K562 (cell line): ENCODE measurements at regions of chr22 and their contacts with region 1.

Region 1: GRCh38 chr22:17830043-17830961 is 56.0 kb upstream of the BID start:
- DNase-seq: peak; percentile 89 to 91 (median 90)
- ATAC-seq: peak; percentile 97
- H3K4me3 ChIP-seq: no peak overlapping the region
- H3K27ac ChIP-seq: no peak overlapping the region
- H3K4me1 ChIP-seq: peaks cover 0 to 8% of the 10 kb centered on the region in 2 experiments; a peak in 1 of 5 replicates
- H3K27me3 ChIP-seq: no peaks in the 10 kb centered on the region
- CTCF ChIP-seq: peak; percentile 97 to 99 (median 98)
- EP300 ChIP-seq: no peak
- POLR2A ChIP-seq: no peak
- RAD21 ChIP-seq: peak; percentile 95 to 99

Region 2: DNA sequence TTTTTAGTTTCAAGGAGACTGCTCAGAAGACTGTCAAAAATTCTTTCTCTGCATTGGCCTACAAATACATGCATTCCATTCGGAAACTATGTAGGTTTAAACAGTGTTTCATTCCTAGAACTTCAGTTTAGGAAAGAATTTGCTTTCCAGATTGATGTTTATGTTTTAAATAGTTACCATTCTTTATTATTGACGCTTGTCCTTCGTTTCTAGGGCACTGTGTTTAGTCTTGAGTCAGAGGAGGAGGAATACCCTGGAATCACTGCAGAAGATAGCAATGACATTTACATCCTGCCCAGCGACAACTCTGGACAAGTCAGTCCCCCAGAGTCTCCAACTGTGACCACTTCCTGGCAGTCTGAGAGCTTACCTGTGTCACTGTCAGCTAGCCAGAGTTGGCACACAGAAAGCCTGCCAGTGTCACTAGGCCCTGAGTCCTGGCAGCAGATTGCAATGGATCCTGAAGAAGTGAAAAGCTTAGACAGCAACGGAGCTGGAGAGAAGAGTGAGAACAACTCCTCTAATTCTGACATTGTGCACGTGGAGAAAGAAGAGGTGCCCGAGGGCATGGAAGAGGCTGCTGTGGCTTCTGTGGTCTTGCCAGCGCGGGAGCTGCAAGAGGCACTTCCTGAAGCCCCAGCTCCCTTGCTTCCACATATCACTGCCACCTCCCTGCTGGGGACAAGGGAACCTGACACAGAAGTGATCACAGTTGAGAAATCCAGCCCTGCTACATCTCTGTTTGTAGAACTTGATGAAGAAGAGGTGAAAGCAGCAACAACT is 103.6 kb before region 1 on chr22:
- CTCF ChIA-PET with region 1: no interaction called
- POLR2A ChIA-PET with region 1: no interaction called
- in situ Hi-C with region 1: no loop called
- intact Hi-C with region 1: no loop called
- DNase-seq: no peak
- ATAC-seq: no peak
- H3K4me3 ChIP-seq: no peak overlapping the region
- H3K27ac ChIP-seq: no peak overlapping the region
- H3K4me1 ChIP-seq: peaks cover 0 to 8% of the 10 kb centered on the region in 2 experiments; a peak in 2 of 5 replicates
- H3K27me3 ChIP-seq: no peaks in the 10 kb centered on the region
- CTCF ChIP-seq: no peak
- EP300 ChIP-seq: no peak
- POLR2A ChIP-seq: no peak
- RAD21 ChIP-seq: no peak

Region 3: DNA sequence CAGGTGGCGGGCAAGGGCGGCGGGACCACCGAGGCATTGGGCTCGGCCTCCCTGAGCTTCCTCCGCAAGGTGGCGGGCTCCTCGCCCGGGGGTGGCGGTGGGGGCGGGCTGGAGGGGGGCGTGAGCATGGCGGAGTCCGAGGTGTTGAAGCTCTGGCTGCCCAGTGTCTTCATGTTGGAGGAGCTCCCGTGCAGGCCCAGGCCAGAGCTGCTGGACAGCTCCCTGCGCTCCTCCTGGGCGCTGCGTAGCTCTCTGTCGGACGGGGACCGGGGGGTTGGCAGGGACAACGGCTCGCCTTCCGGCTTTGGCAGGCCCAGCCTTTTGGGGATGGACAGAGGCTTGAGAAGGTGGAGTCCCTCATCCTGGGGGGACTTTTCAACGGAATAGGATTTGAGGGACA is 12.1 kb before region 1 on chr22:
- CTCF ChIA-PET with region 1: no interaction called
- POLR2A ChIA-PET with region 1: interaction called, 10 read pairs
- in situ Hi-C with region 1: no loop called
- intact Hi-C with region 1: no loop called
- DNase-seq: no peak
- ATAC-seq: no peak
- H3K4me3 ChIP-seq: no peak overlapping the region
- H3K27ac ChIP-seq: no peak overlapping the region
- H3K4me1 ChIP-seq: peaks cover 0 to 8% of the 10 kb centered on the region in 2 experiments; a peak in 1 of 5 replicates
- H3K27me3 ChIP-seq: no peaks in the 10 kb centered on the region
- CTCF ChIP-seq: no peak
- EP300 ChIP-seq: no peak
- POLR2A ChIP-seq: no peak
- RAD21 ChIP-seq: no peak

Region 4: DNA sequence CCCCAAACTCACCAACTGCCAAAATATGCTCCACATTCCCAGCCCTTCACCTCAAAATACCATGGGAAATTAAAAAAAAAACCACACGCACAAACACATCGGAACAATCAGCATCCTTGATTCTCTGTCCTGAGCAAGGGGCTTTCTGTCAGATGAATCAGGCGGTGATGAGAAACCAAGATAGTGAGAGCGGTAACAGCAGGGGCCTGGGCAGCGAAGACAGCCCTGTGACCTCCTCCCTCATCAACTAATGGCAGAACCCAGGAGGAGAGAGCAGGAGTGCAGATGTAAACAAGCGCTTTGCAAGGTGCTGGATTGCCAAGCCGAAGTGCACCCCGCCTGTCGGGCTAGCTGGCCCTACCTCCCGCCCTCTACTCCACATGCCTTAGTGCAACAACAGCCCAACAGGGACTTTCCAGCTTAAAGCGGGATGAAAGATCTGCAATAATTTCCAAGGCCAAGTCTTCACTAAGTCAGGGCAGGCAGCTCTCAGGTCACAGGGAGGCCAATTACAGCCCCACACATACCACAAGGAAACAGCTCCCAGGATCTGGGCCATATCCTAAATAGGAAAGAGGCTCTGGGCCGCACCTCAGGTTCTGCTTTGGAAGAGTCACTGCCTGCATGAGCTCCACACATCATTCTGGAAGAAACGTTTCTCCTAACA is 16.2 kb after region 1 on chr22:
- CTCF ChIA-PET with region 1: no interaction called
- POLR2A ChIA-PET with region 1: no interaction called
- in situ Hi-C with region 1: no loop called
- intact Hi-C with region 1: no loop called
- DNase-seq: no peak
- ATAC-seq: no peak
- H3K4me3 ChIP-seq: no peak overlapping the region
- H3K27ac ChIP-seq: no peak overlapping the region
- H3K4me1 ChIP-seq: peaks cover 0 to 16% of the 10 kb centered on the region in 2 experiments; a peak in 2 of 5 replicates
- H3K27me3 ChIP-seq: no peaks in the 10 kb centered on the region
- CTCF ChIP-seq: no peak
- EP300 ChIP-seq: no peak
- POLR2A ChIP-seq: no peak
- RAD21 ChIP-seq: no peak

Region 5: GRCh38 chr22:17881366-17881765 is 51.1 kb after region 1 on chr22:
- CTCF ChIA-PET with region 1: no interaction called
- POLR2A ChIA-PET with region 1: no interaction called
- in situ Hi-C with region 1: no loop called
- intact Hi-C with region 1: no loop called
- DNase-seq: no peak
- ATAC-seq: no peak
- H3K4me3 ChIP-seq: no peak overlapping the region
- H3K27ac ChIP-seq: no peak overlapping the region
- H3K4me1 ChIP-seq: peaks cover 0 to 3% of the 10 kb centered on the region in 2 experiments; a peak in 1 of 5 replicates
- H3K27me3 ChIP-seq: no peaks in the 10 kb centered on the region
- CTCF ChIP-seq: no peak
- EP300 ChIP-seq: no peak
- POLR2A ChIP-seq: no peak
- RAD21 ChIP-seq: no peak

Region 6: DNA sequence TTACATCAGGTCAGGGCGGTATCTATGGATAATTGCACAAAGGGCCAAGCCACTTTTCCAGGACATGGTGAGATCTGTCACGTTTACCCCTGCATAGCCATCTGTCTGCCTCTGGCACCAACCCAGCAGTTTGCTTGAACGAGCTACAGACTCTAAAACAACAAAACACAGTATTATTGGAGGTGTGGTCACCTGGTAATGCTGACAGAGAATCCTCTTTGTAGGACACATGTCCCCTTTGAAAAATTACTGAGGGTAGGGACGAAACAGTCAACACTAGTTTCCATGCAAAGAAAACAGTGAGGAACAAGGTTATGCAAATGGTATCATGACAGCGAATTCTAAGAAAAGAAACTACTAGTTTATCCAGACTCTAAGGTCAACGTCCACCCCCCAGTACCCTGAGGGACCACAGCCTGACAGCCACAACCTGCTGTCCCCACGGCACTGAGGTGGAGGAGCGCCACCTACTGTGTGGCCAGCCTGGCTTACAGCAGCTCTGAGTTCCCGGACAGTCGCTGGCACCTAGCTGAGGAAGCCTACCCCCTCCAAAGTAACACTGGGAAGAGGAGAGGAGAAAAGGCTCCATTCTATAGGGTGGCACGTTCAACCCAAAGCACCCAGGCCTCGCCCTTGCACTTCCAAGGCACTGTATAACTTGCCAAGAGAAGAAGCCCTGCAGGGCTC is 61.3 kb after region 1 on chr22:
- CTCF ChIA-PET with region 1: interaction called, 21 read pairs
- POLR2A ChIA-PET with region 1: no interaction called
- in situ Hi-C with region 1: no loop called
- intact Hi-C with region 1: loop called (anchors 1 kb)
- DNase-seq: peak; percentile 51 to 59 (median 55)
- ATAC-seq: peak; percentile 84
- H3K4me3 ChIP-seq: no peak overlapping the region
- H3K27ac ChIP-seq: no peak overlapping the region
- H3K4me1 ChIP-seq: no peaks in the 10 kb centered on the region
- H3K27me3 ChIP-seq: no peaks in the 10 kb centered on the region
- CTCF ChIP-seq: peak; percentile 67 to 78 (median 68)
- EP300 ChIP-seq: no peak
- POLR2A ChIP-seq: no peak
- RAD21 ChIP-seq: peak; percentile 26 to 73; a peak in 3 of 4 replicates

Region 7: DNA sequence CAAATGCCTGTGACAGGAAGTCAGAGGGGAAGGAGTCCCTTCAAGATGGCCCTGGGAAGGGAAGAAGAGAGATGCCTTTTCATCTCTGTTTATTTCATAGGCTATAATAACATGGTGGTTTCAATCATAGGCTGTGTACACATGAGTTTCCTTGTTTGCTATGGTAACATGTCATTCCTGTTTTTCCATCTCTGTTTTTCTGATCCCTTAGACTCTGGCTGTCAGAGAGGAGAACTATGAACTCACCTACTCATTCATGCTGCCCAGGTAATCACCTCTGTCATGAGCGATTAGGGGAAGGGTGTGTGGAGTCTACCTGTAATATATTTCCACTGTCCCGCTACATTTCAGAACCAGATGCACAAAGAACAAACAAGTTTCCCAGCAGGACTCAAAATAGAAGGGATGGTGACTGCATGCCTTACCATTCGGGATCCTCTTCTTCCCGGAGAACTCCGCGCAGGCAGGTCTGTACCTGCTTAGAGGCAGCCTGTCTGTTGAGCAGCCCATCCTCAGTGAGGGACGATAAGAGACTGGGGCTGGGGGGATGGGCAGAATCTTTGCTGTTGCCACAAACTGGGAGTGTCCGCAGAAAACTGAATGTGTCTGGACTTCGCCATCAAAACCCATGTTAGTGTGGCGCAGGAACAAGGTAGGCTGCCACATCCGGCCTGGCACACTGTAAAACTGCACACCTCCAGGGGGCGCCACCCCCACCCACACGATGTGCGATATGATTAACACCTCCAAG is 240.4 kb after region 1 on chr22:
- CTCF ChIA-PET with region 1: interaction called, 82 read pairs
- POLR2A ChIA-PET with region 1: interaction called, 16 read pairs
- in situ Hi-C with region 1: loop called (anchors 5 kb)
- intact Hi-C with region 1: no loop called
- DNase-seq: peak in 1 of 4 experiments; percentile 40
- ATAC-seq: peak; percentile 11; the same call in 2 of the 3 replicates
- H3K4me3 ChIP-seq: no peak overlapping the region
- H3K27ac ChIP-seq: no peak overlapping the region
- H3K4me1 ChIP-seq: peaks cover 4 to 5% of the 10 kb centered on the region in 2 experiments; a peak in 2 of 5 replicates
- H3K27me3 ChIP-seq: peaks cover 33 to 41% of the 10 kb centered on the region in 2 experiments
- CTCF ChIP-seq: peak; percentile 38 to 72 (median 46)
- EP300 ChIP-seq: no peak
- POLR2A ChIP-seq: no peak
- RAD21 ChIP-seq: no peak